GM12878 (cell line): ENCODE measurements at regions of chr9 and their contacts with region 1.

Region 1: GRCh38 chr9:115591584-115591984 is 473.6 kb upstream of the TNC start:
- DNase-seq: peak; percentile 5
- ATAC-seq: peak; percentile 66
- H3K4me3 ChIP-seq: no peak overlapping the region
- H3K27ac ChIP-seq: no peak overlapping the region
- H3K4me1 ChIP-seq: no peaks in the 10 kb centered on the region
- H3K27me3 ChIP-seq: no peaks in the 10 kb centered on the region
- CTCF ChIP-seq: peak; percentile 62 to 65 (median 65)
- EP300 ChIP-seq: no peak
- POLR2A ChIP-seq: no peak
- RAD21 ChIP-seq: peak; percentile 69

Region 2: DNA sequence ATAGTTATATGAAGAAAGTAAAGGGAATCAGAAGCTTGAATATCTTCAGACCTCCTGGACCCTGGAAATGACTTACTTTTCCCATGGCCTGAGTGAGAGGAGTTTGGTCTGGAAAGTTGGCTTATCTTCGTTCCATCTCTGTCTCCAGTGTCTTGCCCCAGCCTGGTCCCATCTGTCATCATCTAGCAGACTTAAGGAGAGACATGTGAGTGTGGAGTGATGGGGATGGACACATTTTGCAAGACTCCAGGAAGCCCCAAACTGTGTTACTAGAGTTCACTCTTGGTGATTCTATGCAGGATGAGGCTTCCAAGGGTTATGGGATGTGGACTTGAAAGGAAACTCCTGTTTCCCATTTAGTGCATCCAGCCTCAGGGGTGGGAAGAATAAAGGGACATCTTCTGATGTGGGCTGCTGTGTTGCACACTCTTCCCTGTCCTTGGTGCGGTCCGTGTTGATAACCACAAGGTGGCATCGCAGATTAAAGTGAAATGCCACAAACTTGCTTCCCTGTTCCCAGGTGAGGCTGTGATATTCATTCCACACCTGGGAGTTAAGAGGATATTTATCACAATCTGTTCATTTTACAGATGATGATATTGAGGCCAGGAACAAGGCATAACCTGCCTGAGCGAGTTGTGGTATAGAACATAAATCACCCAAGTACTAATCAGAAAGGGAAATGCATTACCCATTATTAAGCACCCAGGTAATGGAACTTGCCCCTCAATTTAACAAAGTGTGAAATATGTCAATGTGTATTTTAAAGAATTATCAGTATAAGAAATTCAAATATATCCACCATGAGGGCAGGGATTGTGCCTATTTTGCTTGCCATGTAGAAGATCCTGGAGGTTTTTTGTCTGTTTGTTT is 292.1 kb after region 1 on chr9:
- CTCF ChIA-PET with region 1: interaction called, 3 read pairs
- POLR2A ChIA-PET with region 1: no interaction called
- RAD21 ChIA-PET with region 1: no interaction called
- SMC1A ChIA-PET with region 1: no interaction called
- in situ Hi-C with region 1: no loop called
- intact Hi-C with region 1: loop called (anchors 10 kb)
- DNase-seq: no peak
- ATAC-seq: peak; percentile 63
- H3K4me3 ChIP-seq: no peak overlapping the region
- H3K27ac ChIP-seq: no peak overlapping the region
- H3K4me1 ChIP-seq: no peaks in the 10 kb centered on the region
- H3K27me3 ChIP-seq: no peaks in the 10 kb centered on the region
- CTCF ChIP-seq: peak; percentile 26 to 44 (median 32); a peak in 4 of 6 replicates
- EP300 ChIP-seq: no peak
- POLR2A ChIP-seq: no peak
- RAD21 ChIP-seq: peak; percentile 42; the same call in 1 of the 2 replicates

Region 3: DNA sequence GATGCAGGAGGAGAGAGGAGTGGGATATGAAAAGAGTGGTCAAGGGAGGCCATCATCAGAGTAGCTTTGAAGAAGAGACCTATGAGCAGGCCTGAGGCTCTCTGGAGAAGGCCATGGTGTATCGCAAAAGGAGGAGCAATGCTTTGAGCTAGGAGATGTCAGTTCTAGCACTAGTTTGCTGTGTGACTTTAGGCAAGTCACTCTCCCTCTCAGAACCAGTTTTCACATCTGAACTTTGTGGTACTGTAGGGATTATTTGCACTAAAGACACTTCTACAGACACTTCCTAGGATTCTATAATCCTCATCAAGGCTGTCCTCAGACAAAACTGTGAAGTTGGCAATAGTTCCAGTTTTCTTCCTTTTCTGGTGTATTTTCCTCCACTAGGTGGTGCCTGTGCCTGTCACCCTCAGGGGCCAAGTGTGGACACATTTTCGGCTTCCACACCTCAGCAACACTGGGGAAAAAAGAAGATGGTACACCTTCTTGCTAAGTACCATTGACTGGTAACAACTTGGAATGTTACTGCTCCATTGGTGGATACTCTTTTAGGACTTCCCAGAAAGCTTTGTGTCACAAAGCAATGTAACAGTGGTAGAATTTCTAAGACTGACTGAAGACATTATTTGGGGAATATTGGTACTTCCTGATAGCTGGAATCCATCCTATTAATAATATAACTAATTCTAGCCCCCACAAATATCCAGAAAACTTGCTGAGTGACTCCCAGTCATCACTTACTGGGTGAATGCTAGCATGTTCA is 571.9 kb after region 1 on chr9:
- CTCF ChIA-PET with region 1: interaction called, 4 read pairs
- POLR2A ChIA-PET with region 1: no interaction called
- RAD21 ChIA-PET with region 1: no interaction called
- SMC1A ChIA-PET with region 1: no interaction called
- in situ Hi-C with region 1: loop called (anchors 10 kb)
- intact Hi-C with region 1: loop called (anchors 5 kb)
- DNase-seq: no peak
- ATAC-seq: peak; percentile 54
- H3K4me3 ChIP-seq: no peak overlapping the region
- H3K27ac ChIP-seq: no peak overlapping the region
- H3K4me1 ChIP-seq: no peaks in the 10 kb centered on the region
- H3K27me3 ChIP-seq: no peaks in the 10 kb centered on the region
- CTCF ChIP-seq: peak; percentile 36 to 42 (median 41); a peak in 4 of 6 replicates
- EP300 ChIP-seq: no peak
- POLR2A ChIP-seq: no peak
- RAD21 ChIP-seq: peak; percentile 48

Region 4: DNA sequence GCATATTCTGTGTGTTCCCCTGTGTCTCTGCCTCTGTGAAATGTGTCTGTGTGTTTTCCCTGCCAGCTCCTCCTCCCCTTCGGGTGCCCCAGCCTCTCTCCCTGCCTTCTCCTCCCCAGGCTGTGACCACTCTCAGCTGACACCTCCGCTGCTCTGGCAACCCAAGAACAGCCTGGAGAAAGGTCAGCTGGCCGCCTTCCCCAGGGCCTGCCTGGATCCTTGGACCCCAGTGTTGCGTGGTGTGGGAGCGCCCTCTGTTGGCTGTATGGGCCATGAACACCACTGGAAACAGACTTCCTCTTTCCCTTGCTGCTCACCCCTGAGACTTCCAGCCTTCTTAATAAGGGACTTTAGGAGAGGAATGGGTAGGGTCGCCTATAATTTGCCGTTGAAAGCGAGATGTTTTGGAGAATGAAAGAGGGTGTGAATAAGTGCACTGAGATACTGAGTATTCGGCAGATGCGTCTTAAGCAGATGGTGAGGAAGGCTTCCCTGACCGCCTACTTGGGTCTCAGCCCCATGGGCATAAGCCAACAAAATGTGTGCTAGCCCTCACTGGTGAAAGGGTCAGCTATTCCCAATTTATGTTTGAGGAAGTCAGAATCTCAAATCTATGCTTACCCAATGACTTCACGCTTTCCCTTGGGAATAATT is 980.6 kb after region 1 on chr9:
- CTCF ChIA-PET with region 1: interaction called, 13 read pairs
- POLR2A ChIA-PET with region 1: no interaction called
- RAD21 ChIA-PET with region 1: interaction called, 4 read pairs
- SMC1A ChIA-PET with region 1: interaction called, 7 read pairs
- in situ Hi-C with region 1: no loop called
- intact Hi-C with region 1: loop called (anchors 1 kb)
- DNase-seq: no peak
- ATAC-seq: peak; percentile 99
- H3K4me3 ChIP-seq: no peak overlapping the region
- H3K27ac ChIP-seq: no peak overlapping the region
- H3K4me1 ChIP-seq: no peaks in the 10 kb centered on the region
- H3K27me3 ChIP-seq: no peaks in the 10 kb centered on the region
- CTCF ChIP-seq: peak; percentile 85 to 92 (median 90)
- EP300 ChIP-seq: no peak
- POLR2A ChIP-seq: no peak
- RAD21 ChIP-seq: peak; percentile 92

Region 5: GRCh38 chr9:116661037-116661954 is 1069.7 kb after region 1 on chr9:
- CTCF ChIA-PET with region 1: interaction called, 11 read pairs
- POLR2A ChIA-PET with region 1: no interaction called
- RAD21 ChIA-PET with region 1: interaction called, 3 read pairs
- SMC1A ChIA-PET with region 1: no interaction called
- in situ Hi-C with region 1: no loop called
- intact Hi-C with region 1: loop called (anchors 2 kb)
- DNase-seq: peak; percentile 24
- ATAC-seq: peak; percentile 90
- H3K4me3 ChIP-seq: no peak overlapping the region
- H3K27ac ChIP-seq: no peak overlapping the region
- H3K4me1 ChIP-seq: no peaks in the 10 kb centered on the region
- H3K27me3 ChIP-seq: no peaks in the 10 kb centered on the region
- CTCF ChIP-seq: peak; percentile 63 to 83 (median 66)
- EP300 ChIP-seq: no peak
- POLR2A ChIP-seq: no peak
- RAD21 ChIP-seq: peak; percentile 84